WTC11 (cell line): ENCODE measurements at regions of chr2 and their contacts with region 1.

Region 1: GRCh38 chr2:109510136-109511028 is 103.4 kb downstream of the SEPTIN10 start:
- DNase-seq: peak; percentile 82
- ATAC-seq: peak; percentile 89
- H3K4me3 Mint-ChIP-seq: no peak overlapping the region
- H3K27ac Mint-ChIP-seq: no peak overlapping the region
- H3K4me1 Mint-ChIP-seq: no peaks in the 10 kb centered on the region
- H3K27me3 Mint-ChIP-seq: no peaks in the 10 kb centered on the region
- CTCF ChIP-seq: peak; percentile 84

Region 2: GRCh38 chr2:108436976-108437375 is 1073.4 kb before region 1 on chr2:
- CTCF ChIA-PET with region 1: no interaction called
- POLR2A ChIA-PET with region 1: interaction called, 10 read pairs
- DNase-seq: no peak
- ATAC-seq: no peak
- H3K4me3 Mint-ChIP-seq: no peak overlapping the region
- H3K27ac Mint-ChIP-seq: no peak overlapping the region
- H3K4me1 Mint-ChIP-seq: no peaks in the 10 kb centered on the region
- H3K27me3 Mint-ChIP-seq: no peaks in the 10 kb centered on the region
- CTCF ChIP-seq: no peak

Region 3: DNA sequence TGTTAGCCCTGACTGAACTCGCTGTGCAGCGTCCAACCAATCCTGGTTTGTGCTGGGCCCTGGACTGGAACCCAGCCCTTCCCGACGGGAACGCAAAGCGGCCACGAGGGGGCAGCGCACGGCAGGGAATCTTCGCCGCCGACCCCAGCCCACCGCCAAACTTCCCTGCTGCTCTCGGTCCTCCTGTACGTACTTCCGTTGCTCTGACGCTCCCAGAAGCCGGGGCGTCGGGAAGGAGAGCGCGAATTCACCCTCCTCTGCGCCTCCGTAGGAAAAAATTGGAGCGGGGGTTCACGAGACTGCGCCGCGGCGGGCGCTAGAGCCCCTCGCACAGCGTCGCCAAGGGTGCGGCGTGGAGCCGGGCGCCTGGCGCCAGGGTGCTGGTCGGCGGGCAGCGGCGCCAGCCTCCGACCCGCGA is 382.3 kb before region 1 on chr2:
- CTCF ChIA-PET with region 1: interaction called, 14 read pairs
- POLR2A ChIA-PET with region 1: no interaction called
- DNase-seq: peak; percentile 86
- ATAC-seq: peak; percentile 83
- H3K4me3 Mint-ChIP-seq: peak overlapping the region; percentile 61
- H3K27ac Mint-ChIP-seq: no peak overlapping the region
- H3K4me1 Mint-ChIP-seq: peaks cover 16% of the 10 kb centered on the region
- H3K27me3 Mint-ChIP-seq: peaks cover 63% of the 10 kb centered on the region
- CTCF ChIP-seq: peak; percentile 71

Region 4: GRCh38 chr2:109331896-109332848 is 178.2 kb before region 1 on chr2:
- CTCF ChIA-PET with region 1: interaction called, 10 read pairs
- POLR2A ChIA-PET with region 1: no interaction called
- DNase-seq: peak; percentile 20
- ATAC-seq: peak; percentile 66
- H3K4me3 Mint-ChIP-seq: no peak overlapping the region
- H3K27ac Mint-ChIP-seq: no peak overlapping the region; the same call in 1 of the 2 replicates
- H3K4me1 Mint-ChIP-seq: peaks cover 34% of the 10 kb centered on the region
- H3K27me3 Mint-ChIP-seq: no peaks in the 10 kb centered on the region
- CTCF ChIP-seq: no peak

Region 5: DNA sequence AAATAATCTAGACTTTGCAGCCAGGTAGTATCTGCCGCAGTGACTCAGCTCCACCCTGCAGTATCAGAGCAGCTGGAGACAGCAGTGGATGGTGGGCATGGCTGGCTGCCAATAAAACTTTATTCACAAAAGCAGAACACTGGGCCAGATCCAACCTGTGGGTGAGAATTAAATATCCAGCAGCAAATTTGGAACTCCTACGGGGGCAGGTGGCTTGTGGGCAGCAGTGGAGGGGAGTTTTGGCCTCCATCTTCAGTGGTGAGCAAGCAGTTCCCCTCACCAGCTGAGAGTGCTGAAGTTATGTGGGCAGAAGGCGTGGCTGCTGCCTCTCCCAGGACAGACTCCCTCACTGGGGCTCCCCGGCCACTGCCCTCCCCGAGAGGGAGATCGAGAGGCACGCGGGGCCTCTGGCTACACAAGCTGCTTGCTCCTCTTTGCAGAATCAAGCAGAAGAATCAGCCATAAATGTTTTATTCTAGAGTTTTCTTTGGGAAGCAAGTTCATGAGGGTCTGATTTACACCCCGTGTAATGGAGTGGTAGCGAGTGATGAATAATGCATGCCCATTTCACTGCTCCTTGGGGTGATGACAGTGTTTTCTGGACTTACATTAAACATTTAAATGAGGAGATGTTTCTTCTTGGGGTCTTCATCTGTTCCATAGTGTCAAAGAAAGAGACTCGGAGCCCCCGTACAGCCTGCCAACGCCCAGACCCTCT is 100.9 kb before region 1 on chr2:
- CTCF ChIA-PET with region 1: interaction called, 17 read pairs
- POLR2A ChIA-PET with region 1: no interaction called
- DNase-seq: no peak
- ATAC-seq: no peak
- H3K4me3 Mint-ChIP-seq: no peak overlapping the region
- H3K27ac Mint-ChIP-seq: no peak overlapping the region
- H3K4me1 Mint-ChIP-seq: peaks cover 19% of the 10 kb centered on the region
- H3K27me3 Mint-ChIP-seq: no peaks in the 10 kb centered on the region
- CTCF ChIP-seq: no peak

Region 6: DNA sequence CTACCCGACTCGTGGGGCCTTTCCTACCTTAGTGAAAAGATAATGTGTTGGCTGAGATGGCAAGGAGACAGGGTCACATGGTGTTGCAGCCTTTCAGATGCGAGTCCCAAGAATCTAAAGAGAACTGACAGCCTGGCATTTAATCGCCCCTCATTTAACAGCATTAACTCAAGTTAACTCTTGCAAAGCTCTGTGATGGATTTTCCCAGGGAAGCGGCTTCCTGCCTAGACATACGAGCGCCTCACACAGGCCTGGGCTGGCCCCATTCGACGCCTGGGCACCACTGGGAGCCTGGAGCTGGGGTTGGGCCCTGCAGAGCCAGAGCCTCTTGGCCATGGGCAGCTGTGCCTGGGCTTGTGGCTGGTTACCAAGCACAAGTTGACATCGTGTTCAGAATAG is 37.4 kb before region 1 on chr2:
- CTCF ChIA-PET with region 1: interaction called, 10 read pairs
- POLR2A ChIA-PET with region 1: no interaction called
- DNase-seq: peak; percentile 22
- ATAC-seq: peak; percentile 78
- H3K4me3 Mint-ChIP-seq: no peak overlapping the region
- H3K27ac Mint-ChIP-seq: no peak overlapping the region
- H3K4me1 Mint-ChIP-seq: peaks cover 4% of the 10 kb centered on the region; the same call in 1 of the 2 replicates
- H3K27me3 Mint-ChIP-seq: no peaks in the 10 kb centered on the region
- CTCF ChIP-seq: no peak

Region 7: GRCh38 chr2:109494351-109494750 is 16.0 kb before region 1 on chr2:
- CTCF ChIA-PET with region 1: interaction called, 15 read pairs
- POLR2A ChIA-PET with region 1: no interaction called
- DNase-seq: no peak
- ATAC-seq: no peak
- H3K4me3 Mint-ChIP-seq: no peak overlapping the region
- H3K27ac Mint-ChIP-seq: no peak overlapping the region
- H3K4me1 Mint-ChIP-seq: no peaks in the 10 kb centered on the region
- H3K27me3 Mint-ChIP-seq: no peaks in the 10 kb centered on the region
- CTCF ChIP-seq: no peak